ENCODE measurements at regions of chr6 and their contacts with region 1.

Region 1: GRCh38 chr6:136792410-136793262 is at the start of gene MAP3K5:
- DNase-seq: peak; percentile 85
- H3K4me3 ChIP-seq: peak within 1 kb of the TSS; percentile 74 to 81
- H3K27ac ChIP-seq: peak within 1 kb of the TSS; percentile 70 to 92
- H3K4me1 ChIP-seq: peaks cover 2 to 6% of the 10 kb centered on the region in 2 experiments; a peak in 2 of 4 replicates
- H3K27me3 ChIP-seq: no peaks in the 10 kb centered on the region
- CTCF ChIP-seq: peak; percentile 75
- EP300 ChIP-seq: no peak
- RAD21 ChIP-seq: peak; percentile 87
- polyA plus RNA-seq, gene MAP3K5: 1.4 TPM in 2 replicates

Region 2: DNA sequence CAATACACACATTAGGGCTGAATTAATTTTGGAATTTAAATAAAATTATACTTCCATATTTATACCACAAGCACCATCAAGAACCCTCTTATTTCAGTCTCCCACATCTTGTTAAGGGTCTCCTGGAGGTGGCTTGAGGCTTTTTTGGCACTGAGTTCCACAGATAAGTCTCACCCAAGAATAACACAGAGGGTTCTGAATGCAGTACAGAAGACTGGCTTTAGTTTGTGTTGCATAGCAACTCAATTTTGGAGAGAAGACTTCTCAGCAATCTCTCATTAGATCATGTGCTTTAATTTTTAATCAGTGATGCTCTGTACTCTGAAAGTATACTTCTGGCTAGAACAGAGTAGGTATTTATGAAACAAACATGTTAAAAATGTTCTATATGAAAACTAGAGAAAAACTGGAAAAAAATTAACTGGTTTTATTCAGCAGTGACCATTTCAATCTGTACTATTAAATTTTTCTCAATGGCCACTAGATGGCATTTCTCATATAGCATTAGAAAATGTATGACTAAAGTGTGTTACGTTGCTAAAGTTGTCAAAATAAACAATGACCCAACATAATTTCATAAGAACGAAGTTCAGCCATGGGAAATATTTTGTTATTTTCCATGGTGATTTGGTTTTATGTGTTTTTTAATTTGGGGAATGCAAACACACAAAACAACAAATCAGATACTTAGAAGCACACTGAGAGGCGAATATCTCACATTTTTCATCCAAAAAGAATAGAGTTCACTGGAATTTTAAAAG is 209.7 kb before region 1 on chr6:
- CTCF ChIA-PET with region 1: interaction called, 13 read pairs
- POLR2A ChIA-PET with region 1: no interaction called
- DNase-seq: peak; percentile 36
- H3K4me3 ChIP-seq: no peak overlapping the region
- H3K27ac ChIP-seq: peak overlapping the region in 1 of 2 experiments; percentile 75; a peak in 2 of 4 replicates
- H3K4me1 ChIP-seq: peaks cover 0 to 6% of the 10 kb centered on the region in 2 experiments; a peak in 1 of 4 replicates
- H3K27me3 ChIP-seq: no peaks in the 10 kb centered on the region
- CTCF ChIP-seq: peak; percentile 73
- EP300 ChIP-seq: no peak
- RAD21 ChIP-seq: peak; percentile 67

Region 3: DNA sequence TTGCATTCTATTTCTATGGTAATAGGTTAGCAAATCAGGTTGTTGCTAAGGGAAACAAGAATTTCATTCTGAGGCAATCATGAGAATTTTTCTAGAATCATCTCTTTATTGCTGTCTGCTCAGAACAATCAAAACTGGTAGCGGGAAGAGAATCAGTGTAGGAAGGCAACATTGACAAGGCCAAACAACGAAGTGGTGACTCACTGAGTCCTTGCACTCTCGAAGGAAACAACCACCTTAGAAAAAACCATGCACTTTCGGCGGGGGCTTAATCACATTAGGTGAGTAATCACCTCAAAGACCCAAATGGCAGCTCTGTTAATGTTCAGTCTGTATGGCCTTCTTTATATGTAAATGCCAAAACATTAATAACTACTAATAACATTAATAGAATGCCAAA is 163.6 kb before region 1 on chr6:
- CTCF ChIA-PET with region 1: interaction called, 16 read pairs
- POLR2A ChIA-PET with region 1: interaction called, 3 read pairs
- DNase-seq: no peak
- H3K4me3 ChIP-seq: no peak overlapping the region
- H3K27ac ChIP-seq: peak overlapping the region in 1 of 2 experiments; percentile 47; a peak in 1 of 4 replicates
- H3K4me1 ChIP-seq: no peaks in the 10 kb centered on the region; a peak in 1 of 4 replicates
- H3K27me3 ChIP-seq: no peaks in the 10 kb centered on the region
- CTCF ChIP-seq: no peak
- EP300 ChIP-seq: no peak
- RAD21 ChIP-seq: no peak

Region 4: GRCh38 chr6:136669299-136669699 is 123.3 kb before region 1 on chr6:
- CTCF ChIA-PET with region 1: interaction called, 17 read pairs
- POLR2A ChIA-PET with region 1: no interaction called
- DNase-seq: no peak
- H3K4me3 ChIP-seq: no peak overlapping the region
- H3K27ac ChIP-seq: no peak overlapping the region
- H3K4me1 ChIP-seq: peaks cover 0 to 3% of the 10 kb centered on the region in 2 experiments; a peak in 2 of 4 replicates
- H3K27me3 ChIP-seq: no peaks in the 10 kb centered on the region
- CTCF ChIP-seq: no peak
- EP300 ChIP-seq: no peak
- RAD21 ChIP-seq: no peak

Region 5: DNA sequence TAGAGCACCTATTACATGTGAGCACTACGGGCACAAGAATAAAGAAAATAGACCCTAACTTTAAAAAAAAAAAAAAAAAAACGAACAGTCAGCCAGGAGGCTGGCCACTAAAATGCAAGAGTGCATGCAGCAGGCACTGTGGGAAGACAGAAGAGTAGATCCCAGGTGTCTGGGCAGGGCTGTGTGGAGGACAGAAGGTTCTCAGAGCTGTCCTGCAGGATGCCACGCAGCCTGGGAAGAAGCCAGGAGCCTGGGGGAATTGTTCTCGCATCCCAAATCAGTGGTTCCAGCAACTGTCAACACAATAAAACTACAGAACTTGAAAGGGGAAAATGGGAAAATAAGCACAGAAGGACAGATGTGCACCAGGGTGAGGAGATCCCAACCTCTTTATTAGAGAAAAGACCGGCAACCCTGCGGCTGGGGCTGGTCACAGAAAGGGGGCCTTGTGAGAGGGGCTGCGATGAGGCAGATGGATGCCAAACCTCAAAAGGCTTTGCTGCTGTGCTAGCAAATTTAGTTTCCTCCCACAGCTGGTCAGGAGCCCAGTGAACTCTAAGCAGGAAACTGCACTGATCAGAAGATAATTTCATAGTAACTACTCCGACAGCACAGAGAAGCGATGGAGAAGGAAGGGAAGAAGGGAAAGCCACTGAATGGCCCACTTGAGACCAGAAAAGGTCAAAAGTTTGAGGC is 31.3 kb before region 1 on chr6:
- CTCF ChIA-PET with region 1: interaction called, 18 read pairs
- POLR2A ChIA-PET with region 1: no interaction called
- DNase-seq: peak; percentile 39
- H3K4me3 ChIP-seq: peak overlapping the region in 1 of 2 experiments; percentile 18; a peak in 2 of 4 replicates
- H3K27ac ChIP-seq: peak overlapping the region; percentile 64 to 76
- H3K4me1 ChIP-seq: peaks cover 8 to 16% of the 10 kb centered on the region in 2 experiments; a peak in 3 of 4 replicates
- H3K27me3 ChIP-seq: no peaks in the 10 kb centered on the region
- CTCF ChIP-seq: no peak
- EP300 ChIP-seq: no peak
- RAD21 ChIP-seq: no peak

Region 6: DNA sequence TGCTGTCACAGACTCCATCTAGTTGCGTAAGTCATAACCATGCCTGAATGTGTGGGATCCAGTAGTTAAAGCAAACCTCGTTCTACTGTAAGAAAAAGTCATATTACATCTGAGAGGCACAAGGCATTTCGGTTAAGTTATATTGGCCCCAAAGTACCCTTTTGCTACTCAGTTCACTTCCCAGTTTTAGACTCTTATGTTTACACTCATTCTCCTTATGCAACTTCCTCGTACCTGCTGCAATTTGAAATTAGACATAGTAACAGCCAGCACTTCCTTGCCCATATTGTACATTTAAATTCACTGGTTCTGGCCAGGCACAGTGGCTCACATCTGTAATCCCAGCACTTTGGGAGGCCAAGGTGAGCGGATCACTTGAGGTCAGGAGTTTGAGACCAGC is 66.8 kb after region 1 on chr6:
- CTCF ChIA-PET with region 1: no interaction called
- POLR2A ChIA-PET with region 1: no interaction called
- DNase-seq: no peak
- H3K4me3 ChIP-seq: no peak overlapping the region
- H3K27ac ChIP-seq: no peak overlapping the region
- H3K4me1 ChIP-seq: peaks cover 0 to 2% of the 10 kb centered on the region in 2 experiments; a peak in 1 of 4 replicates
- H3K27me3 ChIP-seq: no peaks in the 10 kb centered on the region
- CTCF ChIP-seq: no peak
- EP300 ChIP-seq: no peak
- RAD21 ChIP-seq: no peak

Region 7: GRCh38 chr6:136889271-136890191 is 96.9 kb after region 1 on chr6:
- CTCF ChIA-PET with region 1: interaction called, 13 read pairs
- POLR2A ChIA-PET with region 1: no interaction called
- DNase-seq: no peak
- H3K4me3 ChIP-seq: no peak overlapping the region
- H3K27ac ChIP-seq: peak overlapping the region in 1 of 2 experiments; percentile 69; a peak in 2 of 4 replicates
- H3K4me1 ChIP-seq: peaks cover 6 to 14% of the 10 kb centered on the region in 2 experiments; a peak in 3 of 4 replicates
- H3K27me3 ChIP-seq: no peaks in the 10 kb centered on the region
- CTCF ChIP-seq: no peak
- EP300 ChIP-seq: no peak
- RAD21 ChIP-seq: no peak

Region 8: GRCh38 chr6:137067399-137067798 is 274.8 kb after region 1 on chr6:
- CTCF ChIA-PET with region 1: no interaction called
- POLR2A ChIA-PET with region 1: no interaction called
- DNase-seq: no peak
- H3K4me3 ChIP-seq: no peak overlapping the region
- H3K27ac ChIP-seq: no peak overlapping the region
- H3K4me1 ChIP-seq: no peaks in the 10 kb centered on the region
- H3K27me3 ChIP-seq: no peaks in the 10 kb centered on the region
- CTCF ChIP-seq: no peak
- EP300 ChIP-seq: no peak
- RAD21 ChIP-seq: no peak